Dendritic cell treated with granulocyte-macrophage colony-stimulating factor and Interleukin-4, amounts not matched to agents 40 ng/mL and 50 ng/mL, for 4 days (primary cell): ENCODE measurements at regions of chr7 and their contacts with region 1.

Region 1: DNA sequence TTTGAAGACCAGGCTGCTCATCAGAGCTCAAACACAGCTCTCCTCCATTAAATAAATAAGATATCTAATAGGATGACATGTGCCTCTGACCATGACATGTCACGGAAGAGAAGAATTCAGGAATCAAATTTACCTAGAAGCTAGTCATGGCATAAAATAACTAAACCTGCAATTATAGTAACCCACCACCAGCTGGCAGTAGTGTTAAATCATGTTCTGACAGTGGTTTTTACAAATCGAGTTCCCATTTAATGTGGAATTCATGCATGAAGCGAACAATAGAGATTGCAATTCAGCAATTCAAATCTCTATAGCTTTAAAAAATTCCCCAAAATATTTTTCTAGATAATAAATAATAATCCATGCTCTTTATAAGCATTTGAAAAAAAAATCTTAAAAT is 74.6 kb upstream of the IKZF1 start:
- H3K4me3 Mint-ChIP-seq: no peak overlapping the region
- H3K27ac Mint-ChIP-seq: no peak overlapping the region
- H3K4me1 Mint-ChIP-seq: peaks cover 31% of the 10 kb centered on the region
- H3K27me3 Mint-ChIP-seq: no peaks in the 10 kb centered on the region

Region 2: DNA sequence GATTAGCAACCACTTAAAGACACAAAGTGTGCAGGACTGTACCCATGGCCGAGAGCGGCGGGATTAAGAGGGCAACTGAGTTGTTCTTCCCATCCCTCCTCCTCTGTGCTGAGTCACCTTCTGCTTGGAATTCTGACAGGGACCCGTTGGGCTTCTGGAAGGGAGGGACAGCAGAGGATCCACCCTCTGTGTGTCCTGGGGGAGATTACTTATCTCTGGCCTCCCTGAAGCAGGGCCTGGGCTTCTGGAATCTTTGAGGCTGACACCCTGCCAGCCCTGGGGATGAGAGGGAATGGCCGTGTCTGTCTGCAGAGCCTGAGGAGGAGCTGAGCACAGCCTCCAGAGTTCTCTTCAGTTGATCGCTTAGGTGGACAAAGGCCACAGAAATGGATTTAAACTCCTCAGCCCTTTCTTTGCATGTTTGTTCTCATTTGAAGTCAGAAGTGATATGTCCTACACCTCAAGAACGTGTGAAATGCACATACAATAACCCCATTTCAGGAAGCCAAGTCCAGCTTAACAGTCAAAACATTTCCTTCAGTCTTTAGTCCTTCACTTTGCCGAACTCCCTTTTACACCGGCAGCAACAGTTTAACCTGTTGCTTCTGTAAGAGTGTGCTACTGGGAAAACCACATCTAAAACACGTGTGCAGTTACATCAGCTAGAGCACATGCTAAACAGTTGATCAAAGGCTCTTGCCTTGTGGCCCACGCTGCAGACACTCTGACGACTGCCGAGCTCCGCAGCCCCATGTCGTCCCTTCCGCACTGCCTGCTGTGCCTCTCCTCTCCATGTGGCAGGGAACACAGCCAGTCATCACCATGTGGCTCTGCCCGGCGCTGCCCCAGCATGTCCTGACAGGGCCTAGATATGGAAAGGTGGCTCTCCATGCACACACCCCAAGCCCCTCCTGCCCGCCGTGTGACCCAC is 130.3 kb after region 1 on chr7:
- intact Hi-C with region 1: loop called (anchors 5 kb)
- H3K4me3 Mint-ChIP-seq: no peak overlapping the region
- H3K27ac Mint-ChIP-seq: peak overlapping the region; percentile 94
- H3K4me1 Mint-ChIP-seq: peaks cover 76% of the 10 kb centered on the region
- H3K27me3 Mint-ChIP-seq: no peaks in the 10 kb centered on the region